Gastrocnemius medialis (tissue), 4 donors: ENCODE measurements at regions of chr1 and their contacts with region 1.

Region 1: GRCh38 chr1:151156515-151156819 is at the start of gene TNFAIP8L2:
- DNase-seq: peak in 1 of 2 donors; percentile 30
- ATAC-seq: peak in 1 of 2 donors; percentile 22
- H3K4me3 ChIP-seq: peak within 1 kb of the TSS in 1 of 4 donors; percentile 33
- H3K27ac ChIP-seq: peak within 1 kb of the TSS in 2 of 4 donors; percentile 12 to 29
- H3K4me1 ChIP-seq: peaks cover 16 to 17% of the 10 kb centered on the region in 2 donors
- H3K27me3 ChIP-seq: no peaks in the 10 kb centered on the region
- CTCF ChIP-seq: no peak
- POLR2A ChIP-seq: no peak
- total RNA-seq, gene TNFAIP8L2: 1.1 to 3.1 (median 1.4) TPM in 3 of 4 donors, not detected in the other

Region 2: GRCh38 chr1:151070474-151071276 is 85.8 kb before region 1 on chr1 and contains the start of gene GABPB2:
- in situ Hi-C with region 1: no loop called
- intact Hi-C with region 1: loop called (anchors 2 kb)
- DNase-seq: peak; percentile 88 to 94
- ATAC-seq: peak; percentile 91
- H3K4me3 ChIP-seq: peak within 1 kb of the TSS; percentile 85 to 96 (median 92)
- H3K27ac ChIP-seq: peak within 1 kb of the TSS; percentile 94 to 99 (median 98)
- H3K4me1 ChIP-seq: peaks cover 9 to 19% of the 10 kb centered on the region in 2 donors
- H3K27me3 ChIP-seq: no peaks in the 10 kb centered on the region
- CTCF ChIP-seq: peak; percentile 57 to 94 (median 90)
- POLR2A ChIP-seq: peak; percentile 43 to 50
- total RNA-seq, gene GABPB2: 11.9 to 20.5 (median 17.9) TPM

Region 3: GRCh38 chr1:151098126-151098525 is 58.3 kb before region 1 on chr1:
- in situ Hi-C with region 1: loop called (anchors 5 to 10 kb)
- intact Hi-C with region 1: loop called (anchors 1 kb)
- DNase-seq: no peak
- ATAC-seq: no peak
- H3K4me3 ChIP-seq: no peak overlapping the region
- H3K27ac ChIP-seq: no peak overlapping the region
- H3K4me1 ChIP-seq: no peaks in the 10 kb centered on the region
- H3K27me3 ChIP-seq: no peaks in the 10 kb centered on the region
- CTCF ChIP-seq: no peak
- POLR2A ChIP-seq: no peak

Region 4: GRCh38 chr1:151106894-151107293 is 49.6 kb before region 1 on chr1:
- in situ Hi-C with region 1: loop called in 1 of 4 experiments (anchors 10 kb)
- intact Hi-C with region 1: no loop called
- DNase-seq: no peak
- ATAC-seq: no peak
- H3K4me3 ChIP-seq: no peak overlapping the region
- H3K27ac ChIP-seq: no peak overlapping the region
- H3K4me1 ChIP-seq: no peaks in the 10 kb centered on the region
- H3K27me3 ChIP-seq: no peaks in the 10 kb centered on the region
- CTCF ChIP-seq: no peak
- POLR2A ChIP-seq: no peak

Region 5: DNA sequence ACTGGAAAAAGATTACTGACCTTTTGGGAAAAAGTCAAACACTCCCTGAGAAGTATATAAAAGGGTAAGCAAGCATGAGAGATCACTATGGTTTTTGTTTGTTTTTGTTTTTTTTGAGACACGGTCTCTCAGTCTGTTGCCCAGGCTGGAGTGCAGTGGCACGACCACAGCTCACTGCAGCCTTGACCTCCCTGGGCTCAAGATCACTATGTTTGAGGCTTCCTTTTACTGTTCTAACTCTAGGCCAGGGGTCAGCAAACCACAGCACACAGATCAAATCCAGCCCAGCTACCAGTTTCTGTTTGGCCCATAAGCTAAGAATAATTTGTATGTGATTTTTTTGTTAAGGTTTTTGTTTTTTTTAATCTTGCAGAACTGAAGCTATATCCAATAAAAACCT is 268.6 kb after region 1 on chr1:
- in situ Hi-C with region 1: no loop called
- intact Hi-C with region 1: no loop called
- DNase-seq: no peak
- ATAC-seq: no peak
- H3K4me3 ChIP-seq: no peak overlapping the region
- H3K27ac ChIP-seq: no peak overlapping the region
- H3K4me1 ChIP-seq: no peaks in the 10 kb centered on the region
- H3K27me3 ChIP-seq: no peaks in the 10 kb centered on the region
- CTCF ChIP-seq: no peak
- POLR2A ChIP-seq: no peak

Region 6: GRCh38 chr1:152596986-152597385 is 1440.5 kb after region 1 on chr1:
- in situ Hi-C with region 1: no loop called
- intact Hi-C with region 1: no loop called
- DNase-seq: no peak
- ATAC-seq: no peak
- H3K4me3 ChIP-seq: no peak overlapping the region
- H3K27ac ChIP-seq: no peak overlapping the region
- H3K4me1 ChIP-seq: no peaks in the 10 kb centered on the region
- H3K27me3 ChIP-seq: no peaks in the 10 kb centered on the region
- CTCF ChIP-seq: no peak
- POLR2A ChIP-seq: no peak